B cell (primary cell): ENCODE measurements at regions of chr17 and their contacts with region 1.

Region 1: DNA sequence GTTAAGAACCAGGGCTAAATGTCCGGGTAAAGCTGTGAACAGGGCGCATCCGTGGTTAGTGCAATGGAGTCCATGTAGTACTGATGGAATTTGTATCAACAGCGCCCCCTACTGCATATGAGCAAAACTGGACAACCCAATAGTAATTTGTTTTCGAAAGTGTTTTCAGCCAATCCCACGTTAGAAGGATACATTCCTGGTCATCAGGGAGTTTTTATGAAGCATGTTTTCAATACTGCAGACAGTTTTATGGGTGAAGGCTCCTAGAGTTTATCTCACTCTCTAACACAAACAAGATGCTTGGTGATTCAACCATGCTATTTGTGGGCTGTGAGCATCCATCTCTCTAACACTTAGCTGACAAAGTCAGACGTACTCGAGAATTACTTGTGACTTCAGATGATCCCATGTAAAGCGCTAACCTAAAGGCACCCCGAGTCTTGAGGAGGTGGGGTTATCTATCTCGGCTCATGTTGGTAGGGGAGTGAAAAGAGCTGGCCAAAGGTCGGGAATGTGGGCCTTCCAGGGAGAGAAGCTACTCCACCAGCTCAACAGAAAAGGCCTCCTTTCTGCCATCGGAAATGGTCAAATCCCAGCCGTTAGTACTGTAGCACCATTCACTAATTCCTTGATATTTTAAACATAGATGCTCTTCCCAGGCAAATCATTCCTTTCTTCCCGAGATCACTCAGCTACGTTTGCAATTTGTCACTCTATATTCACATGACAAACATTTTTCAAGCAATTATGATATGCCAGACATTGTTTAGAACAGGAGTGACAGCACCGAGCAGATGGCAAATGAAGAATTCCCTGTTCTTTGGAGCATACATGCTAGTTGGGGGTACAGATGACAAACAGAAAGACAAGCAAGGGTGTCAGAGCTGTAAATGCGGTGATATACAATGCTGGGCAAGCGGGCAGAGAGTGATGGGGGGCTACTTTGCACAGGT is 46.9 kb upstream of the HNF1B start:
- DNase-seq: peak; percentile 77
- ATAC-seq: peak; percentile 69
- H3K4me3 ChIP-seq: no peak overlapping the region
- H3K4me3 Mint-ChIP-seq: no peak overlapping the region
- H3K27ac ChIP-seq: no peak overlapping the region
- H3K27ac Mint-ChIP-seq: no peak overlapping the region
- H3K4me1 ChIP-seq: no peaks in the 10 kb centered on the region
- H3K4me1 Mint-ChIP-seq: peaks cover 5% of the 10 kb centered on the region
- H3K27me3 ChIP-seq: peaks cover 0 to 12% (median 4%) of the 10 kb centered on the region in 4 experiments
- H3K27me3 Mint-ChIP-seq: peaks cover 33% of the 10 kb centered on the region
- CTCF ChIP-seq: peak; percentile 81

Region 2: DNA sequence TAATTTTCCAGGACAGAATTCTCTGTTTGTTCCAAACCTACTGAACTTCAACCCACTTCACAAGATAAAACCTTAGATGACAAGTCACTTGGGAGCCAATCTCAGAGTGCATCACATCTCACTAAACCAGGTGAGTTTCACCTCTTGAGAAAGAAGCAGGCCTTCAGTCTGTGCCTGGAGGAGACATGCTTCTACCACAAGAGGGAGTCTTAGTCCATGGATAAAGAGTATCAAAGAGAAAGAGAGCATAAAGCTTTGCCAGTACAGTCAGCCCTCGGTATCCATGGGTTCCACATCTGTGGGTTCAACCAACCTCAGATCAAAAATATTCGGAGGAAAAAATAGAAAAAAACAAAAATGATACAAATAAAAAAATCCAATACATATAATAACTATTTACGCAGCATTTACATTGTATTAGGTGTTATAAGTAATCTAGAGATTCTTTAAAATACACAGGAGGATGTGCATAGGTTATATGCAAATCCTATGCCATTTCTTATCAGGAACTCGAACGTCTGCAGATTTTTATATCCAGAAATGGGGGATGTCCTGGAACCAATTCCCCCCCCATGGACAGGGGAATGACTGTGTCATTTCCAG is 264.4 kb before region 1 on chr17:
- CTCF ChIA-PET with region 1: interaction called, 8 read pairs
- POLR2A ChIA-PET with region 1: no interaction called
- intact Hi-C with region 1: loop called (anchors 1 kb)
- DNase-seq: peak; percentile 46
- ATAC-seq: no peak
- H3K4me3 ChIP-seq: no peak overlapping the region
- H3K4me3 Mint-ChIP-seq: no peak overlapping the region
- H3K27ac ChIP-seq: no peak overlapping the region
- H3K27ac Mint-ChIP-seq: no peak overlapping the region
- H3K4me1 ChIP-seq: no peaks in the 10 kb centered on the region
- H3K4me1 Mint-ChIP-seq: no peaks in the 10 kb centered on the region
- H3K27me3 ChIP-seq: no peaks in the 10 kb centered on the region
- H3K27me3 Mint-ChIP-seq: no peaks in the 10 kb centered on the region
- CTCF ChIP-seq: peak; percentile 66

Region 3: DNA sequence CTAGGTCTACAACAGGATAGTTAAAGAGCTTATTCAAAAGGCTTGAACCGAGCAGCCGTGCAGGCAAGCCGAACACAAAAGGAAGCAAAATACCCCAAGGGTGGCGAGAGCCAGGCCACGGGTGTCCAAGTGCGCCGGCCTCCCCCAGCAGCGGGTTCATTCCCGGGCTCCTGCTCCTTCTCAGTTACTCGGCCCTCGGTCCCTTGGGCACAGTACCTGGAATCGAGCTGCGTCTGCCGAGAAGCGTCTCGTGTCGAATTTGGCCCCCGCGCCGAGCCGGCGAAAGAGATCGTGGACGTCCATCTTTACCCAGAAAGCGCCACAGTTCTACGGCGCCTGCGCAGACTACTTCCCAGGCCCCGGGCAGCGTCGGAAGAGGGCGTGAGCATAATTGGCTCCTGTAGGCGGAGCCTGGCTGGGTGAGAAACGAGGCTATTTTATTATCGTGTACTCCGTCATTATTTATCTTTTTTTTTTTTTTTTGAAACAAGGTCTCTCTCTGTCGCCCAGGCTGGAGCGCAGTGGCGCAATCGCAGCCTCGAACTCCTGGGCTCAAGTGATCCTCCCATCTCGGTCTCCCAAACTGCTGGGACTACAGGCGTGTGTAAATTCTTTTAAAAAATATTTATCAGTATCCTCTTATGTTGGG is 148.5 kb before region 1 on chr17 and contains the start of gene DDX52:
- CTCF ChIA-PET with region 1: interaction called, 8 read pairs
- POLR2A ChIA-PET with region 1: no interaction called
- intact Hi-C with region 1: loop called (anchors 1 kb)
- DNase-seq: peak; percentile 93
- ATAC-seq: peak; percentile 99
- H3K4me3 ChIP-seq: peak within 1 kb of the TSS; percentile 62 to 97 (median 85)
- H3K4me3 Mint-ChIP-seq: peak within 1 kb of the TSS; percentile 94
- H3K27ac ChIP-seq: peak within 1 kb of the TSS; percentile 64 to 77
- H3K27ac Mint-ChIP-seq: peak within 1 kb of the TSS; percentile 91
- H3K4me1 ChIP-seq: peaks cover 16 to 17% of the 10 kb centered on the region in 2 donors
- H3K4me1 Mint-ChIP-seq: peaks cover 29% of the 10 kb centered on the region
- H3K27me3 ChIP-seq: peaks cover 0 to 30% (median 17%) of the 10 kb centered on the region in 4 experiments
- H3K27me3 Mint-ChIP-seq: peaks cover 29% of the 10 kb centered on the region
- CTCF ChIP-seq: no peak
- total RNA-seq, gene DDX52: 33.0 and 38.2 TPM in 2 replicates

Region 4: DNA sequence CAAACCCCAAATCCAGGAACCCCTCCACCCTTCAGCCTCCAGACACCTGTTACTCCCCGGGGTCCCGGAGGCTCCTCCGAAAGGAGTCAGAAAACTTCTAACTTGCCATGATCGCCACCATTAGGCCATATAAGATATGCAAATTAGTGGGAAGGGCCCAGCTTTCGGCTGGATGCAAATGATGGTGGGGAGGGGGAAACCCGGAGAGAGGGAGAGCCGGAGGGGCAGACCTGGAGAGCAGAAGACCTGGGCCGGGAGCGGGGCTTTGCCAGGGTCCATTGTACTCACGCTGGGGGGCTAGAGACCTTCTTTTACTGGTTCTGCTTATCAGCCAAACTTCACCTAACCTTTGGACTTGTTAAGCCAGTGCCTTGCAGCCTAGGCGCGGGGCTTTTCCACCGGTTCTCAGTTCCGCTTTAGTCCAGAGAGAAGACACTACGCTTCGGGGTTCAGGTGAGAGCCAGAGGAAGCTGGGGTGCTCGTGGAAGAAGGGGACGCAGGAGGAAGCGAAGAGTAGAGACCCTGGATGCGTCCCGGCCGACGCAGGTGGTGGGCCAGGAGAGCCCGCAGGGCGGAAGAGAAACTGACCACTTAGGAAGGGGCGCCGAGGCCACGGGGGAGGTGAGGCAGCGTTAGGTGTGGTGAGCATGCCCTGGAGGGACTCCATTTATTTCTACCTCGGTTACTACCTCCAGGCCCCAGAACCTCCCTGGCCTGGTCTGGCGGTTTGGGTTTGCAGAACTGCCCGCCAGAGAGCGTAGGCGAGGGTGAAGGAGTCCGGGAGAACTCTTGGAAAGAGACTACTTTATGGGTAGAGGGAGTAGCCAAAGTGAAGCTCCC is 46.5 kb before region 1 on chr17 and contains the start of gene HNF1B:
- CTCF ChIA-PET with region 1: interaction called, 13 read pairs
- POLR2A ChIA-PET with region 1: interaction called, 3 read pairs
- intact Hi-C with region 1: loop called (anchors 1 kb)
- DNase-seq: peak; percentile 90
- ATAC-seq: peak; percentile 81
- H3K4me3 ChIP-seq: peak within 1 kb of the TSS; percentile 13 to 46 (median 41)
- H3K4me3 Mint-ChIP-seq: peak within 1 kb of the TSS; percentile 84
- H3K27ac ChIP-seq: no peak within 1 kb of the TSS
- H3K27ac Mint-ChIP-seq: peak within 1 kb of the TSS; percentile 73
- H3K4me1 ChIP-seq: peaks cover 51 to 62% of the 10 kb centered on the region in 2 donors
- H3K4me1 Mint-ChIP-seq: peaks cover 42% of the 10 kb centered on the region
- H3K27me3 ChIP-seq: peaks cover 0 to 84% (median 61%) of the 10 kb centered on the region in 4 experiments
- H3K27me3 Mint-ChIP-seq: peaks cover 56% of the 10 kb centered on the region
- CTCF ChIP-seq: no peak
- total RNA-seq, gene HNF1B: 1.5 and 1.6 TPM in 2 replicates

Region 5: GRCh38 chr17:37844158-37844976 is 52.6 kb after region 1 on chr17:
- CTCF ChIA-PET with region 1: interaction called, 14 read pairs
- POLR2A ChIA-PET with region 1: no interaction called
- intact Hi-C with region 1: loop called (anchors 10 kb)
- DNase-seq: peak; percentile 68
- ATAC-seq: peak; percentile 91
- H3K4me3 ChIP-seq: peak overlapping the region; percentile 19 to 75 (median 47)
- H3K4me3 Mint-ChIP-seq: peak overlapping the region; percentile 88
- H3K27ac ChIP-seq: peak overlapping the region; percentile 66 to 76
- H3K27ac Mint-ChIP-seq: peak overlapping the region; percentile 78
- H3K4me1 ChIP-seq: peaks cover 26 to 30% of the 10 kb centered on the region in 2 donors
- H3K4me1 Mint-ChIP-seq: peaks cover 47% of the 10 kb centered on the region
- H3K27me3 ChIP-seq: no peaks in the 10 kb centered on the region
- H3K27me3 Mint-ChIP-seq: no peaks in the 10 kb centered on the region
- CTCF ChIP-seq: peak; percentile 80

Region 6: DNA sequence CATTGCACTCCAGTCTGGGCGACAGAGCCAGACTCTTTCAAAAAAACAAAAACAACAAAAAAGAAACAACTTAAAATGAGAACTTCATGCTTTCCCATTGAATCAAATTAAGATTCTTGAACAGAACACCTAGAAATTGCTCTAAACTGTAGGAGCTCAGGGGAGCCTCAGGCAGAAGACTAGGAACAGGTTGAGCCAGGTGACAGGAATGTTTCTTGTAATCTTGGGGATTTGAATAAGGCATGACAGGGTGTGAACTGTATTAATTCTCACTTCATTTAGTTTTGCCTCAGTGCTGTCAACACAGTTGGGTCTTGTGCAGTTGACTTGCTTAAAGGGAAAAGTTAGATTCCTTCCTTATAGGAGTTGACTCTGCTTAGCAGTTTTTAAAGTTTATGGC is 587.7 kb after region 1 on chr17:
- CTCF ChIA-PET with region 1: no interaction called
- POLR2A ChIA-PET with region 1: no interaction called
- intact Hi-C with region 1: no loop called
- DNase-seq: no peak
- ATAC-seq: no peak
- H3K4me3 ChIP-seq: no peak overlapping the region
- H3K4me3 Mint-ChIP-seq: no peak overlapping the region
- H3K27ac ChIP-seq: no peak overlapping the region
- H3K27ac Mint-ChIP-seq: no peak overlapping the region
- H3K4me1 ChIP-seq: peaks cover 4 to 5% of the 10 kb centered on the region in 2 donors
- H3K4me1 Mint-ChIP-seq: peaks cover 9% of the 10 kb centered on the region
- H3K27me3 ChIP-seq: no peaks in the 10 kb centered on the region
- H3K27me3 Mint-ChIP-seq: no peaks in the 10 kb centered on the region
- CTCF ChIP-seq: no peak